Heart right ventricle (tissue), 16 donors: ENCODE measurements at regions of chr11 and their contacts with region 1.

Region 1: GRCh38 chr11:37704791-37705190 is 1106.8 kb upstream of the RAG2 start:
- DNase-seq: no peak
- ATAC-seq: no peak
- H3K4me3 ChIP-seq: no peak overlapping the region
- H3K27ac ChIP-seq: no peak overlapping the region
- H3K4me1 ChIP-seq: no peaks in the 10 kb centered on the region
- H3K27me3 ChIP-seq: no peaks in the 10 kb centered on the region
- CTCF ChIP-seq: no peak

Region 2: GRCh38 chr11:37642296-37642695 is 62.5 kb before region 1 on chr11:
- intact Hi-C with region 1: loop called in 1 of 10 experiments (anchors 10 kb)
- DNase-seq: no peak
- ATAC-seq: no peak
- H3K4me3 ChIP-seq: no peak overlapping the region
- H3K27ac ChIP-seq: no peak overlapping the region
- H3K4me1 ChIP-seq: no peaks in the 10 kb centered on the region
- H3K27me3 ChIP-seq: no peaks in the 10 kb centered on the region
- CTCF ChIP-seq: no peak